Panc1 (cell line): ENCODE measurements at regions of chr18 and their contacts with region 1.

Region 1: DNA sequence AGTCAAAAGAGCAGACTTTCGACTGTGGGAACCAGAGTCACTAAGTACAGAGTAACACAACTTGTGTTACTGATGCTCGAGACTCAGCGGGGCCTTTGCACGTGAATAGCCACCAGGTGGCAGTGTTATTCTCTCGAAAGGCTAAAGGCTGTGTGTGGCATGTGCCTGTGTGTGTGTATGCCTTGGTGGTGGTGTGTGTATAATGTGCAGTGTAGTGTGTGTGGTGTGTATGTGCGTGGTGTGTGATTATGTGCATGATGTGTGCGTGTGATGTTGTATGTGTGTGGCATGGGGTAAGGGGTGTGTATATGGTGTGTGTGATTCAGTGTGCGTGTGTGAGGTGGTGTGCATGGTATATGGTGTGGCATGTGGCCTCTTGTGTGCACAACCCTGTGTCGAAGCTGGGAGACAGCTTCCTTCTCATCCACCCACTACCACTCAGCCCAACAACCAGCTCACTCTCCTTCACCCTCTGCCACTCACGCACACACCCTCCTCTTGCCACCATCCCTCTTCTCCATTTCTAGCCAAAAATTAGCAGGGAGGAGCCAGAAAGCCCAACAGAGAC is 83.0 kb upstream of the ZNF532 start:
- DNase-seq: peak; percentile 73
- ATAC-seq: peak; percentile 69
- H3K4me3 ChIP-seq: no peak overlapping the region
- H3K27ac ChIP-seq: peak overlapping the region; percentile 88
- H3K4me1 ChIP-seq: peaks cover 36% of the 10 kb centered on the region
- H3K27me3 ChIP-seq: no peaks in the 10 kb centered on the region
- CTCF ChIP-seq: peak; percentile 66

Region 2: DNA sequence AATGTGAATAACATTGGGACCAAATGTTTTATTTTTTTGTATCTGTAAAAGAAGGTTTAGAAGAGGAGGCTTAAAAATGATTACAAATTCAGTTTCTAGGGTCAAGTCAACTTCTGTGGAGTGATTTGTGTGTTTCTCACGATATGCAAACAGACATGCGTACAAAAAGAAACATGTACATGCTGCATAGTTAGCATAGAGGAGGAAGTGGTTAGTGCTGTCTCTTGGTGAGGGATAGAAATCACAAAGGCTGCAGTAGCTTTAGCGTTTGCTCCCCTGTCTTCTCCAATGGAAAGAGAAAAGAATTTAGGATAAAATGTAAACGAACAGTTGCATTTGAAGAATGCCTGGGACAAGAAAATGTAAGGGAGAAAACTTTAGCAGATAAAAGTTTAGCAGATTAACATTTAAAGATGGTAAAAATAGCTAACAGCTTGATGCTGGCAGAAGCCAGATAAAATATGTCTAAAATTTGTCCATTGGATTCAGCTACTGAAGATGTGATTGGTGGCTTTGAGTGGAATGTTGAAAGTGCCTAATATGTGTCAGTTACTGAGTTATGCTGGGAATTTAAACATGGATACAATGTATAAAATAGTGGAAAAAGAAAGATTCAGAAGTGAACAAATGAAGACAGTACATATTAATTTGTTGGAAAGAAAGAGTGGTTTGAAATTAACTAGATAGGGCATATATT is 65.5 kb before region 1 on chr18:
- CTCF ChIA-PET with region 1: no interaction called
- POLR2A ChIA-PET with region 1: no interaction called
- in situ Hi-C with region 1: no loop called
- intact Hi-C with region 1: no loop called
- DNase-seq: no peak
- ATAC-seq: no peak
- H3K4me3 ChIP-seq: no peak overlapping the region
- H3K27ac ChIP-seq: no peak overlapping the region
- H3K4me1 ChIP-seq: no peaks in the 10 kb centered on the region
- H3K27me3 ChIP-seq: no peaks in the 10 kb centered on the region
- CTCF ChIP-seq: no peak

Region 3: GRCh38 chr18:58863539-58864145 is 81.9 kb after region 1 on chr18:
- CTCF ChIA-PET with region 1: no interaction called
- POLR2A ChIA-PET with region 1: no interaction called
- in situ Hi-C with region 1: no loop called
- intact Hi-C with region 1: loop called (anchors 5 kb)
- DNase-seq: no peak
- ATAC-seq: peak; percentile 62
- H3K4me3 ChIP-seq: peak overlapping the region; percentile 28 to 39
- H3K27ac ChIP-seq: 0 out of 2 replicates have a peak overlapping the region, but pooled peaks have one; percentile 17
- H3K4me1 ChIP-seq: peaks cover 62% of the 10 kb centered on the region
- H3K27me3 ChIP-seq: no peaks in the 10 kb centered on the region
- CTCF ChIP-seq: no peak

Region 4: GRCh38 chr18:59056706-59057492 is 275.2 kb after region 1 on chr18:
- CTCF ChIA-PET with region 1: no interaction called
- POLR2A ChIA-PET with region 1: no interaction called
- in situ Hi-C with region 1: no loop called
- intact Hi-C with region 1: loop called (anchors 5 kb)
- DNase-seq: no peak
- ATAC-seq: no peak; the same call in 1 of the 2 replicates
- H3K4me3 ChIP-seq: no peak overlapping the region
- H3K27ac ChIP-seq: peak overlapping the region; percentile 82
- H3K4me1 ChIP-seq: peaks cover 18% of the 10 kb centered on the region
- H3K27me3 ChIP-seq: no peaks in the 10 kb centered on the region
- CTCF ChIP-seq: peak; percentile 68

Region 5: DNA sequence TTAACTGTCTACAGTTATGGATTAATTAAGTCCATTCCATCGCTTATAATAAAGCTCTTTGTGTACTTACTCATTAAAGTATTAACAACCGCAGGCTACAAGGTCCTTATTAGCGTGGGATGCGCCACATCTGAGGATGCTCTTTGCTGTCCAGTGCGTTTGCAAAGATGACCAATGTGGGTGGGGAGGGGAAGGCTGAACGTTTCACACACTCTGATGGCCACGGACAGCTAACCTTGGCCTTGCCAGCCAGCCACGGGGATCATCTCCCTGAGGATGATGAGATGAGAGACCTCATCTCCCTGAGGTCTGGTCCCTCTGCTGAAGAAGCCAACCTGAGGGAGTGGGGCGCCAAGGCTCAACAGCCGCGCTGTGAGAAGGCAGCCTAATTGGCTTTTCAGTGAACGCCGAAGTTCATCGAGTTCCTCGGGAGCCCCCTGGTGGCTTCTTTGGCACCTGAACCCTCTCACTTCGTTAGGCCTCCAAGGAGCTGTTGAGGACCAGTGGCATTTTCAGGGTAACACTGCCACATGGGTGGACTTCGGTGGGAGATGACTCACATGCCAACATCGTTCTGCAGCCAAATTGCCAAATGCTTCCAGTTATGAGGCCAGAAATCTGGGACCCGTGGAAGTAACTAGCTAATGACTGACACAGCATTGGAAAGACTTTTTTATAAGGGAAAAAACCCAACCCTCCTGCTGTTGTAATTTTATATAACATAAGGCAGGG is 288.6 kb after region 1 on chr18:
- CTCF ChIA-PET with region 1: interaction called, 14 read pairs
- POLR2A ChIA-PET with region 1: no interaction called
- in situ Hi-C with region 1: no loop called
- intact Hi-C with region 1: no loop called
- DNase-seq: peak; percentile 51
- ATAC-seq: peak; percentile 96
- H3K4me3 ChIP-seq: no peak overlapping the region
- H3K27ac ChIP-seq: peak overlapping the region; percentile 54
- H3K4me1 ChIP-seq: no peaks in the 10 kb centered on the region; the same call in 1 of the 2 replicates
- H3K27me3 ChIP-seq: no peaks in the 10 kb centered on the region
- CTCF ChIP-seq: peak; percentile 74